Breast epithelium (tissue), 4 donors: ENCODE measurements at regions of chr7 and their contacts with region 1.

Region 1: DNA sequence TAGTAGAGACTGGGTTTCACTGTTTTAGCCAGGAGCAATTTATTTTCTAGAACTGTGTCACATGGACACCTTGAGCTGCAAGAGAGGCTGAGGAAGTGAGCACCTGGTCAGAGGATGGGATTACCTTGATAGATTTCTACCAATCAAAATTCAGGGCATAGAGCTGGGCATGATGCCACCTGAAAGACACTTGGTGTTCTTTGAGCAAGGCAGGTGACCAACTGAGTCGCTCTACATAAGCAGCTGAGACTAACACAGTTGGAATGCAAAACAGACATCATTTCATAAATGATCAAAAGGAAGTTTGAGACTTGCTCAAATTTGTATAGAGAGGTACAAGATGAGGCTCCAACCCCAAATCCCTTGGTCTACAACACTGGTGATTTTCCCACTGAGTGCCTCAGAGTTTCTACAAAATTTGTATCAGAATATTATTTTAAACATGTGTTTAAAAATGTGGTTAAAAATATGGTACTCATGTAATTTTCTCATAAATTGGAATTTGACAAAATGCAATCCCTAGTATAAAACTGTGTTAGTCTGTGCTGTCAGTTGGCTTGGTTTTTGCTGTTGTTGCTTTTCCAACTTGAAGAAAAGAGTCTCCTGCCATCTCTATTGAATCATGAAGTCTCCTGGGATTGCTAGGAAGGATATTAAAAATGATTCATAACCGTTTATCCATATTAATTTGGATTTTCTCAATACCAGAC is 156.4 kb upstream of the MDFIC start:
- DNase-seq: no peak
- H3K4me3 ChIP-seq: no peak overlapping the region
- H3K27ac ChIP-seq: no peak overlapping the region
- H3K4me1 ChIP-seq: no peaks in the 10 kb centered on the region
- H3K27me3 ChIP-seq: no peaks in the 10 kb centered on the region
- CTCF ChIP-seq: no peak
- POLR2A ChIP-seq: no peak

Region 2: GRCh38 chr7:115032715-115033703 is 267.5 kb after region 1 on chr7:
- intact Hi-C with region 1: loop called (anchors 5 kb)
- DNase-seq: no peak
- H3K4me3 ChIP-seq: no peak overlapping the region
- H3K27ac ChIP-seq: no peak overlapping the region
- H3K4me1 ChIP-seq: no peaks in the 10 kb centered on the region
- H3K27me3 ChIP-seq: no peaks in the 10 kb centered on the region
- CTCF ChIP-seq: no peak
- POLR2A ChIP-seq: no peak

Region 3: DNA sequence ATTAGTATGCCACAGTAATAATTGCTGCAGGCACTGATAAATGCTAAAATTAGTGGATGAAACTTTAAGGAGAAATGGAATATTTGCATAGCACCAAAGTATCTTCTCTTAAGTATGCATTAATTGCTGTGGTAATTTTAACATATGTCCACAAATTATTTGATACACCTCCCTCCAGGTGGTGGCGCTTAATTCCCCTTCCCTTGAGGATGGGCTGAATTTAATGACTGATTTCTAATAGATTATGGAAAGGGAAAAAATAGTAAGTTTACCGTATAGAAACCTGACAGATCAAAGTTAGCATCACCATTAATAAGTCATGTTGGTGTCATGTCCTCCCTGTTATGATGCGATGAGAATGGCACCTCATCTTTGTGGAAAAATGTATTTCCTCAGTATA is 745.8 kb after region 1 on chr7:
- intact Hi-C with region 1: no loop called
- DNase-seq: no peak
- H3K4me3 ChIP-seq: no peak overlapping the region
- H3K27ac ChIP-seq: no peak overlapping the region
- H3K4me1 ChIP-seq: no peaks in the 10 kb centered on the region
- H3K27me3 ChIP-seq: no peaks in the 10 kb centered on the region
- CTCF ChIP-seq: no peak
- POLR2A ChIP-seq: no peak